ENCODE measurements at regions of chr18 and their contacts with region 1.

Region 1: GRCh38 chr18:1213126-1213525 is 308.5 kb downstream of the ADCYAP1 start:
- DNase-seq: no peak
- ATAC-seq: no peak
- H3K4me3 ChIP-seq: no peak overlapping the region
- H3K27ac ChIP-seq: no peak overlapping the region
- H3K4me1 ChIP-seq: no peaks in the 10 kb centered on the region
- H3K27me3 ChIP-seq: no peaks in the 10 kb centered on the region
- CTCF ChIP-seq: no peak

Region 2: GRCh38 chr18:1048032-1048431 is 165.1 kb before region 1 on chr18:
- CTCF ChIA-PET with region 1: no interaction called
- POLR2A ChIA-PET with region 1: no interaction called
- in situ Hi-C with region 1: no loop called
- intact Hi-C with region 1: no loop called
- DNase-seq: no peak
- ATAC-seq: no peak
- H3K4me3 ChIP-seq: no peak overlapping the region
- H3K27ac ChIP-seq: no peak overlapping the region
- H3K4me1 ChIP-seq: no peaks in the 10 kb centered on the region
- H3K27me3 ChIP-seq: no peaks in the 10 kb centered on the region
- CTCF ChIP-seq: no peak

Region 3: GRCh38 chr18:1232867-1233266 is 19.7 kb after region 1 on chr18:
- CTCF ChIA-PET with region 1: no interaction called
- POLR2A ChIA-PET with region 1: no interaction called
- in situ Hi-C with region 1: no loop called
- intact Hi-C with region 1: loop called (anchors 2 kb)
- DNase-seq: no peak
- ATAC-seq: no peak
- H3K4me3 ChIP-seq: no peak overlapping the region
- H3K27ac ChIP-seq: no peak overlapping the region
- H3K4me1 ChIP-seq: no peaks in the 10 kb centered on the region
- H3K27me3 ChIP-seq: no peaks in the 10 kb centered on the region
- CTCF ChIP-seq: no peak

Region 4: GRCh38 chr18:1270080-1270479 is 57.0 kb after region 1 on chr18:
- CTCF ChIA-PET with region 1: no interaction called
- POLR2A ChIA-PET with region 1: interaction called, 15 read pairs
- in situ Hi-C with region 1: no loop called
- intact Hi-C with region 1: no loop called
- DNase-seq: no peak
- ATAC-seq: no peak
- H3K4me3 ChIP-seq: no peak overlapping the region
- H3K27ac ChIP-seq: no peak overlapping the region
- H3K4me1 ChIP-seq: no peaks in the 10 kb centered on the region
- H3K27me3 ChIP-seq: no peaks in the 10 kb centered on the region
- CTCF ChIP-seq: no peak

Region 5: GRCh38 chr18:3119401-3120335 is 1906.5 kb after region 1 on chr18:
- CTCF ChIA-PET with region 1: no interaction called
- POLR2A ChIA-PET with region 1: no interaction called
- in situ Hi-C with region 1: no loop called
- intact Hi-C with region 1: no loop called
- DNase-seq: peak; percentile 7
- ATAC-seq: no peak
- H3K4me3 ChIP-seq: no peak overlapping the region
- H3K27ac ChIP-seq: no peak overlapping the region
- H3K4me1 ChIP-seq: no peaks in the 10 kb centered on the region
- H3K27me3 ChIP-seq: no peaks in the 10 kb centered on the region
- CTCF ChIP-seq: no peak

Measured in Panc1 (cell line).